ENCODE measurements at regions of chr11 and their contacts with region 1.

Region 1: GRCh38 chr11:130213143-130213978 is 53.8 kb downstream of the ST14 start:
- DNase-seq: peak; percentile 6
- ATAC-seq: peak; percentile 96
- H3K4me3 ChIP-seq: no peak overlapping the region
- H3K27ac ChIP-seq: no peak overlapping the region
- H3K4me1 ChIP-seq: no peaks in the 10 kb centered on the region
- H3K27me3 ChIP-seq: peaks cover 46% of the 10 kb centered on the region
- CTCF ChIP-seq: peak; percentile 87
- POLR2A ChIP-seq: no peak
- RAD21 ChIP-seq: peak; percentile 91

Region 2: GRCh38 chr11:129922674-129923073 is 290.7 kb before region 1 on chr11:
- CTCF ChIA-PET with region 1: no interaction called
- POLR2A ChIA-PET with region 1: no interaction called
- dilution Hi-C with region 1: no loop called
- in situ Hi-C with region 1: no loop called
- intact Hi-C with region 1: loop called (anchors 1 kb)
- DNase-seq: no peak
- ATAC-seq: no peak
- H3K4me3 ChIP-seq: no peak overlapping the region
- H3K27ac ChIP-seq: no peak overlapping the region
- H3K4me1 ChIP-seq: no peaks in the 10 kb centered on the region
- H3K27me3 ChIP-seq: no peaks in the 10 kb centered on the region
- CTCF ChIP-seq: no peak
- POLR2A ChIP-seq: no peak
- RAD21 ChIP-seq: no peak

Region 3: GRCh38 chr11:130261571-130261970 is 48.2 kb after region 1 on chr11:
- CTCF ChIA-PET with region 1: no interaction called
- POLR2A ChIA-PET with region 1: no interaction called
- dilution Hi-C with region 1: no loop called
- in situ Hi-C with region 1: no loop called
- intact Hi-C with region 1: no loop called
- DNase-seq: no peak
- ATAC-seq: no peak
- H3K4me3 ChIP-seq: no peak overlapping the region
- H3K27ac ChIP-seq: no peak overlapping the region
- H3K4me1 ChIP-seq: no peaks in the 10 kb centered on the region
- H3K27me3 ChIP-seq: no peaks in the 10 kb centered on the region
- CTCF ChIP-seq: no peak
- POLR2A ChIP-seq: no peak
- RAD21 ChIP-seq: no peak

Region 4: GRCh38 chr11:130383344-130384211 is 170.2 kb after region 1 on chr11:
- CTCF ChIA-PET with region 1: interaction called, 6 read pairs
- POLR2A ChIA-PET with region 1: no interaction called
- dilution Hi-C with region 1: no loop called
- in situ Hi-C with region 1: loop called (anchors 25 kb)
- intact Hi-C with region 1: loop called (anchors 5 kb)
- DNase-seq: peak; percentile 100
- ATAC-seq: peak; percentile 93
- H3K4me3 ChIP-seq: no peak overlapping the region
- H3K27ac ChIP-seq: peak overlapping the region; percentile 31; the same call in 1 of the 2 replicates
- H3K4me1 ChIP-seq: peaks cover 13% of the 10 kb centered on the region
- H3K27me3 ChIP-seq: peaks cover 20% of the 10 kb centered on the region
- CTCF ChIP-seq: no peak
- POLR2A ChIP-seq: no peak
- RAD21 ChIP-seq: 0 out of 2 replicates have a peak, but pooled peaks have one; percentile 1

Region 5: GRCh38 chr11:130390071-130390758 is 176.9 kb after region 1 on chr11:
- CTCF ChIA-PET with region 1: interaction called, 8 read pairs
- POLR2A ChIA-PET with region 1: no interaction called
- dilution Hi-C with region 1: no loop called
- in situ Hi-C with region 1: loop called (anchors 25 kb)
- intact Hi-C with region 1: no loop called
- DNase-seq: peak; percentile 99
- ATAC-seq: peak; percentile 88
- H3K4me3 ChIP-seq: no peak overlapping the region
- H3K27ac ChIP-seq: peak overlapping the region; percentile 68; the same call in 1 of the 2 replicates
- H3K4me1 ChIP-seq: peaks cover 12% of the 10 kb centered on the region
- H3K27me3 ChIP-seq: peaks cover 32% of the 10 kb centered on the region
- CTCF ChIP-seq: peak; percentile 89
- POLR2A ChIP-seq: 0 out of 2 replicates have a peak, but pooled peaks have one; percentile 29
- RAD21 ChIP-seq: peak; percentile 86

Region 6: DNA sequence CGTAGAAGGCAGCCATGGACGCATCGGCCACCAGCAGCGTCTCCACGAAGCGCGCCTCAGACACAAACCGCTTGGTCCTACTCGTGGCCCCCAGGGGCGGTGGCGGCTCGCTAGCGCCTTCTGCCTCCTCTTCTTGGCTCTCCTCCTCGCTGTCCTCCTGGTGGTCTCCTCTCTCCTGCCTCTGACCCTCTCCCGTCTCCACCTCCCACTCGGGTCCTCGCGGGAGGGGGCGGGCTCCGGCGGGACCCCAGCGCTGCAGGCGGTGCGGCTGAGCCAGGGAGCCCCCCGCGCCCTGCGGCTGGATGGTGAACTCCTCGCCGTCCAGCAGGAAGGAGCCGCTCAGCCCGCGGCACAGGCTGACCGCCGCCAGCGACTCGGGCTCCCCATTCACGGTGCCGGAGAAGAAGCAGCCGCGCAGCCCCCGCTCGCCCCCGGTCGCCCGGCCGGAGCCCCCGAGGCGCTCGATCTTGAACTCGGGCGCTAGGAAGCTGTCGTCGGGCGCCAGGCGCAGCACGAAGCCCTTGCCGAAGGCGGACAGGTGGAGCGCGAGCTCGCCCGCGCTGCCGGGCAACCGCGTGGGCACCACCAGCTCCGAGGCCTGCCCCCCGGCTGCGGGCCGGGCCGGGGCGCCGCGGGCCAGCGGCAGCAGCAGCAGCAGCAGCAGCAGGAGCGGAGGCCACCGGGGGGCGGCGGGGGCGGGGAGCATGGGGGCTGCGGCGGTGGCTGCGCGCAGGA is 214.4 kb after region 1 on chr11:
- CTCF ChIA-PET with region 1: interaction called, 4 read pairs
- POLR2A ChIA-PET with region 1: interaction called, 3 read pairs
- dilution Hi-C with region 1: no loop called
- in situ Hi-C with region 1: loop called (anchors 5 kb)
- intact Hi-C with region 1: loop called (anchors 1 kb)
- DNase-seq: no peak
- ATAC-seq: peak; percentile 25
- H3K4me3 ChIP-seq: peak overlapping the region; percentile 47
- H3K27ac ChIP-seq: peak overlapping the region; percentile 1; the same call in 1 of the 2 replicates
- H3K4me1 ChIP-seq: peaks cover 6% of the 10 kb centered on the region; the same call in 1 of the 2 replicates
- H3K27me3 ChIP-seq: peaks cover 65% of the 10 kb centered on the region
- CTCF ChIP-seq: peak; percentile 33
- POLR2A ChIP-seq: no peak
- RAD21 ChIP-seq: peak; percentile 47

Region 7: GRCh38 chr11:130894322-130895025 is 681.1 kb after region 1 on chr11:
- CTCF ChIA-PET with region 1: no interaction called
- POLR2A ChIA-PET with region 1: no interaction called
- dilution Hi-C with region 1: no loop called
- in situ Hi-C with region 1: loop called (anchors 10 kb)
- intact Hi-C with region 1: loop called (anchors 5 kb)
- DNase-seq: peak; percentile 77
- ATAC-seq: peak; percentile 40
- H3K4me3 ChIP-seq: no peak overlapping the region
- H3K27ac ChIP-seq: peak overlapping the region; percentile 19; the same call in 1 of the 2 replicates
- H3K4me1 ChIP-seq: peaks cover 20% of the 10 kb centered on the region
- H3K27me3 ChIP-seq: no peaks in the 10 kb centered on the region
- CTCF ChIP-seq: peak; percentile 86
- POLR2A ChIP-seq: no peak
- RAD21 ChIP-seq: peak; percentile 85